ENCODE measurements at regions of chr17 and their contacts with region 1.

Region 1: GRCh38 chr17:78313735-78314648 is 45.9 kb downstream of the SOCS3 start:
- DNase-seq: peak; percentile 92
- ATAC-seq: peak; percentile 74
- H3K4me3 ChIP-seq: peak overlapping the region; percentile 32 to 57
- H3K27ac ChIP-seq: peak overlapping the region; percentile 99
- H3K4me1 ChIP-seq: peaks cover 52 to 83% of the 10 kb centered on the region in 2 experiments
- H3K27me3 ChIP-seq: no peaks in the 10 kb centered on the region
- CTCF ChIP-seq: no peak
- POLR2A ChIP-seq: peak; percentile 93
- RAD21 ChIP-seq: no peak

Region 2: GRCh38 chr17:78289802-78290363 is 24.1 kb before region 1 on chr17:
- CTCF ChIA-PET with region 1: interaction called, 4 read pairs
- POLR2A ChIA-PET with region 1: interaction called, 6 read pairs
- RAD21 ChIA-PET with region 1: no interaction called
- intact Hi-C with region 1: loop called (anchors 1 kb)
- DNase-seq: peak; percentile 88
- ATAC-seq: peak; percentile 99
- H3K4me3 ChIP-seq: no peak overlapping the region
- H3K27ac ChIP-seq: no peak overlapping the region
- H3K4me1 ChIP-seq: peaks cover 2 to 22% of the 10 kb centered on the region in 2 experiments; a peak in 2 of 4 replicates
- H3K27me3 ChIP-seq: no peaks in the 10 kb centered on the region
- CTCF ChIP-seq: peak; percentile 92 to 98 (median 92)
- POLR2A ChIP-seq: no peak
- RAD21 ChIP-seq: peak; percentile 95

Region 3: GRCh38 chr17:78324391-78325075 is 10.5 kb after region 1 on chr17:
- CTCF ChIA-PET with region 1: interaction called, 12 read pairs
- POLR2A ChIA-PET with region 1: interaction called, 19 read pairs
- RAD21 ChIA-PET with region 1: interaction called in 1 of 2 experiments, 3 read pairs
- intact Hi-C with region 1: no loop called
- DNase-seq: no peak
- ATAC-seq: no peak
- H3K4me3 ChIP-seq: no peak overlapping the region
- H3K27ac ChIP-seq: peak overlapping the region; percentile 47
- H3K4me1 ChIP-seq: peaks cover 31 to 66% of the 10 kb centered on the region in 2 experiments
- H3K27me3 ChIP-seq: no peaks in the 10 kb centered on the region
- CTCF ChIP-seq: no peak
- POLR2A ChIP-seq: no peak
- RAD21 ChIP-seq: no peak

Region 4: GRCh38 chr17:78341559-78342448 is 27.8 kb after region 1 on chr17:
- CTCF ChIA-PET with region 1: interaction called, 8 read pairs
- POLR2A ChIA-PET with region 1: interaction called, 6 read pairs
- RAD21 ChIA-PET with region 1: no interaction called
- intact Hi-C with region 1: loop called (anchors 2 kb)
- DNase-seq: no peak
- ATAC-seq: peak; percentile 43
- H3K4me3 ChIP-seq: peak overlapping the region; percentile 42 to 62
- H3K27ac ChIP-seq: peak overlapping the region; percentile 98
- H3K4me1 ChIP-seq: peaks cover 54 to 98% of the 10 kb centered on the region in 2 experiments
- H3K27me3 ChIP-seq: no peaks in the 10 kb centered on the region
- CTCF ChIP-seq: no peak
- POLR2A ChIP-seq: no peak
- RAD21 ChIP-seq: no peak

Region 5: DNA sequence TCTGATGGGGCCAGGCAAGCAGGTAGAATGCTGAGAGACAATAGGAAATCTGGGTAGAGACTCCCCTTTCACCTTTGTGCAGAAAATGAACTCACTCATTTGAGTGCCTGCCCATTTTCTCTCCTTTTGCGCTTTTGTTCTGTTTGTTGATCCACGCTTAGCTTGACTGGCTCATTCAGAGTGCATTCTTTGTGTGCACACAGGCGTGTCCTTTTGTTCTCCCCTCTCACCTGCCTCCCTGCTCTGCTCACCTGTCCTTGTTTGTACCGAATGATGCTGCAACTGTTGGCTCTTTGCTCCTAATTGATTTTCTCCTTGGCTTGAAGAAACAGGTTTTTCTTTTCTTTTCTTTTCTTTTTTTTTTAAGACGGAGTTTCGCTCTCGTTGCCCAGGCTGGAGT is 80.2 kb after region 1 on chr17:
- CTCF ChIA-PET with region 1: no interaction called
- POLR2A ChIA-PET with region 1: no interaction called
- RAD21 ChIA-PET with region 1: interaction called in 1 of 2 experiments, 11 read pairs
- intact Hi-C with region 1: no loop called
- DNase-seq: no peak
- ATAC-seq: no peak
- H3K4me3 ChIP-seq: no peak overlapping the region
- H3K27ac ChIP-seq: no peak overlapping the region
- H3K4me1 ChIP-seq: peaks cover 13 to 28% of the 10 kb centered on the region in 2 experiments
- H3K27me3 ChIP-seq: no peaks in the 10 kb centered on the region
- CTCF ChIP-seq: no peak
- POLR2A ChIP-seq: no peak
- RAD21 ChIP-seq: no peak

Measured in HCT116 (cell line).